Activated CD8-positive, alpha-beta memory T cell treated with anti-CD3 and anti-CD28 coated beads, Interleukin-2, amount 10 ng/mL, durations not matched to agents 7 days and 5 days (primary cell): ENCODE measurements at regions of chr15 and their contacts with region 1.

Region 1: DNA sequence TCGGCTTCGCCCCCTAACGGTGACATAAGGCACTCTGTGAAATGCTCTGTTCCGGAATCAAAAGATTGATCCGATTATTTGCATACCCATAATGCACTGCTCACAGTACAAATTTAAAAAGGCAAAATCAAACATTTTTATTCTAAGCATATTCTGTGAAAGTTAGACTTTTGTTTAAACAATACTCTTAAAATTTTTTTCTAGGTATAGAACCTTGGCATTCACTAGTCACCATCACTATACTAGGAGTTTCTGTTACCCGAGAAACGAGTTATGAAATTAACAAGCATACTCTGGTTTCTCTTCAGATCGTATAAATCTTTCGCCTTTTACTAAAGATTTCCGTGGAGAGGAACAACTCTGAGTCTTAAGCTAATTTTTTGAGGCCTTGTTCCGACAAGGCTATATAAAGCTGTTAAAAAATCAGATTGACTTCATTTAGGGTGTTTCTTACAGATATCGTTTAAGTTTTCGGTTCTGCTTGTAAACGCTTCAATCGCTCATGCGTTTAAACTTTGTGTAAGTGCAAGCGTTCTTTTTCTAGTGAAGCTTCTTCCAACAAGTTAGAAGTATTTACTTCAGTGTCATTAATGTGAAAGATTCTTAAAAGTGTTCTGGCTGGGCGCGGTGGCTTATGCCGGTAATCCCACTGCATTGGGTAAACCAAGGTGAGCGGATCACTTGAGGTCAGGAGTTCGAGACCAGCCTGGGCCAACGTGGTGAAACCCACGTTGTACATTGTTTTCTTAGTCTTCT is at the start of gene RNU5B-1:
- DNase-seq: peak; percentile 90
- ATAC-seq: peak; percentile 74
- H3K4me3 Mint-ChIP-seq: peak within 1 kb of the TSS; percentile 87
- H3K27ac Mint-ChIP-seq: peak within 1 kb of the TSS; percentile 97
- H3K4me1 Mint-ChIP-seq: peaks cover 36% of the 10 kb centered on the region
- H3K27me3 Mint-ChIP-seq: peaks cover 6% of the 10 kb centered on the region
- total RNA-seq, gene RNU5B-1: 15.8 TPM in 1 of 2 experiments, not detected in the other

Region 2: DNA sequence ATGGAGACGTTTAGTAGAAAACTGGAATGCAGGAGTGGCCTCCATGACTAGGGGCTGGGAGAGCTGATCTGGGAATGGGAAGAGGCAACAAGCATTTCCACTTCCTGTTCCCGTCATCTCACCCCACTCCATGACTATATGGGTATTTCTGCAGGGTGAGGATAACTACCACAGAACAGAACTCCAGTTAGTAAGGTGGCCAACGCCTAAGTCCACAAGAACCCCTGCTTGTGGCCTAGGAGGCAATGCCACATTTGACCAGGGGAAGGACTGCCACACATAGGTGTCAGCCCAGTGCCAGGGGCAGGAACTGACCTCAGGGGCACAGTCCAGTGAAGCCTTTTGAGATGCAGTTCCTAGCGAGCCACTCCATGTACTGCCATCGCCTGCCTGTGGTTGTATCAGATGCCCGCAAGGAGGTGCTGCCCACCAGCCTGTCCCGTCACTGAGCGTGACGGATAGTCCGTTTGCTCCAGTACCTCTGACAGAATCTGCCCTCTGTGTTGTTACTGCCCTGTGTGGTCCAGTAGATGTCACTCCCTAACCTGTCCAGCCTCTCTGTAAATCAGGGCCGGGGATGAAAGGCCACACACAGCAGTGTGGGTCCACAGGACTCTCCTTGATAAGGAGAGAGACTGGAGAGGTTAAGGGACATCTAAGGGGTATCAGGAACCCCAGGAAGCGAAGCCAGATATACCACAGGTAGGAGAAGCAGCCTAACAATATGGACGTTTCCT is 271.6 kb before region 1 on chr15:
- CTCF ChIA-PET with region 1: interaction called, 16 read pairs
- DNase-seq: peak; percentile 58
- ATAC-seq: peak; percentile 27
- H3K4me3 Mint-ChIP-seq: no peak overlapping the region
- H3K27ac Mint-ChIP-seq: no peak overlapping the region
- H3K4me1 Mint-ChIP-seq: peaks cover 17% of the 10 kb centered on the region
- H3K27me3 Mint-ChIP-seq: peaks cover 20% of the 10 kb centered on the region